ENCODE measurements at regions of chr1 and their contacts with region 1.

Region 1: DNA sequence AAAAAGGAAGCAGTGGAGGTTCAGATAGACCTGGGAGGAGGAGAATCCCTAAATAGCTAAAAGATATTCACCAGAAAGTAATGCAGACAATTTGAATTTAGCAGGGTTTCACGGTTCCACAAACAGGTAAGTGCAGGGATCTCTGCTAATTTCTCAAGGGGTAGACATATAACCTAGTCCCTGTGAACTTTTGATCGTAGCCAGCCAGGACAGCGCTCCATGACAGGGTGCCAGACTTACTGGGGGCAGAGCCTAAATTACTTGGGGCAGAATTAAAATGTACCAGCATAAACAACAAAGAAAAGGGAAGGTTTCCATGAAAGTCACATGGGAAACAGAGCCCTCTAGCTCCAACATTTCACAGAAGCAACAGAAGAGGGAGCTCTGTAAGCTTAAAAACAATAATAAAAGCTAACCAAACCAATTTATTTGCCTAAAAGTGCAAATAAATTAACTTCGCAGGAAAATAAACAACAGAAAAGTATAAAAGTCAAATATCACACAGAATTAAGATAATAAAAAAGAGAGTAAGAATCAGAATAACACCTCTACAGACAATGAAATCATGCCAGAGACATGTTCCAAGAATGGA is 198.3 kb downstream of the DUSP10 start:
- DNase-seq: peak in 1 of 7 donors; percentile 9
- H3K4me3 ChIP-seq: no peak overlapping the region
- H3K27ac ChIP-seq: no peak overlapping the region
- H3K4me1 ChIP-seq: no peaks in the 10 kb centered on the region
- H3K27me3 ChIP-seq: no peaks in the 10 kb centered on the region
- CTCF ChIP-seq: peak; percentile 42 to 82 (median 60)
- POLR2A ChIP-seq: no peak

Region 2: DNA sequence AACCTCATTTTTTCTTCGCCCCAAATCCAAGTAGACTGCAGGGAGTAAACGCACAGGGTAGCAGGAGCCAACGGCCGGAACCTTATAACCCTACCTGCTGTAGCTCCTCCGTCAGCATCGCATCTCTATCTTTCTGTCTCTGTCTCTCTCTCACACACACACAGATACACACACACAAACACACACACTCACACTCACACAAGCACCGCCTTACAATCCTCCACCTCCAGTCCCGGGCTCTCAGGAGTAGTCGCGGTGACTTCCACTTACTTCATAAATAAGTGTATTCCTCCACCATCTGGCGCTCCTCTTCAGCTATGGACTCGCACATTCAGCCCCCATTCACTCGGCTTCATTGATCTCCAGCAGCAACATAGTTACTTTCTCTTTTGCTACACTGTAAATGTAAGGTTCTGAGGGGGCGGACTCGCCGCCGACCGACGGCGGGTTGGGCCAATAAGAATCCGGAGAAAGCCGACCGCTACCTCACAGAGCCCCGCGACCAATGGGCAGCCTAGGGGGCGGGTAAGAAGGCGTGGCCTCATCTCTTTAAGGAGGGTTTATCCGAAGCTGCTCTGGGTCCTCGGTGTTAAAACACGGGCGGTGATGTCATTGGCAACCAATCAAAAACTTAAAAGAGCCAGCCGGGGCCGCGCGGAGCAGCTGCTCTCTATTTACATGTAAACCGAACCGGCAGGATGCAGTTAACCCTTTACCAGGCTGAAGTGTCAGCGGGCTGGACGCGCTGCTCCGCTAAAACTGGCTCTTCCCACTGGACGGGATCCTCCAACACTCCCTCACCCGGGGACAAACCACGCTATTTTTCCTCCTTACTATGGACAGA is 198.3 kb after region 1 on chr1 and contains the start of gene DUSP10:
- intact Hi-C with region 1: loop called in 1 of 2 experiments (anchors 10 kb)
- DNase-seq: peak; percentile 99 to 100 (median 99)
- H3K4me3 ChIP-seq: peak within 1 kb of the TSS; percentile 59 to 84 (median 80)
- H3K27ac ChIP-seq: peak within 1 kb of the TSS; percentile 88 to 98 (median 98)
- H3K4me1 ChIP-seq: peaks cover 0 to 13% of the 10 kb centered on the region in 2 donors
- H3K27me3 ChIP-seq: no peaks in the 10 kb centered on the region
- CTCF ChIP-seq: no peak
- POLR2A ChIP-seq: peak; percentile 92 to 98
- total RNA-seq, gene DUSP10: 3.7 to 22.1 (median 7.1) TPM

Region 3: GRCh38 chr1:222009105-222009730 is 465.6 kb after region 1 on chr1:
- intact Hi-C with region 1: loop called in 1 of 2 experiments (anchors 10 kb)
- DNase-seq: peak in 2 of 7 donors; percentile 19 to 21
- H3K4me3 ChIP-seq: no peak overlapping the region
- H3K27ac ChIP-seq: no peak overlapping the region
- H3K4me1 ChIP-seq: no peaks in the 10 kb centered on the region
- H3K27me3 ChIP-seq: no peaks in the 10 kb centered on the region
- CTCF ChIP-seq: peak in 3 of 6 experiments; percentile 40 to 48 (median 45)
- POLR2A ChIP-seq: no peak

Region 4: GRCh38 chr1:222455188-222455879 is 911.7 kb after region 1 on chr1:
- intact Hi-C with region 1: loop called in 1 of 2 experiments (anchors 10 kb)
- DNase-seq: peak; percentile 69 to 95 (median 84)
- H3K4me3 ChIP-seq: peak overlapping the region in 1 of 4 donors; percentile 15
- H3K27ac ChIP-seq: no peak overlapping the region
- H3K4me1 ChIP-seq: no peaks in the 10 kb centered on the region
- H3K27me3 ChIP-seq: no peaks in the 10 kb centered on the region
- CTCF ChIP-seq: peak; percentile 86 to 94 (median 88)
- POLR2A ChIP-seq: no peak

Measured in adrenal gland (tissue), 19 donors.